Aorta (tissue), 5 donors: ENCODE measurements at regions of chr10 and their contacts with region 1.

Region 1: DNA sequence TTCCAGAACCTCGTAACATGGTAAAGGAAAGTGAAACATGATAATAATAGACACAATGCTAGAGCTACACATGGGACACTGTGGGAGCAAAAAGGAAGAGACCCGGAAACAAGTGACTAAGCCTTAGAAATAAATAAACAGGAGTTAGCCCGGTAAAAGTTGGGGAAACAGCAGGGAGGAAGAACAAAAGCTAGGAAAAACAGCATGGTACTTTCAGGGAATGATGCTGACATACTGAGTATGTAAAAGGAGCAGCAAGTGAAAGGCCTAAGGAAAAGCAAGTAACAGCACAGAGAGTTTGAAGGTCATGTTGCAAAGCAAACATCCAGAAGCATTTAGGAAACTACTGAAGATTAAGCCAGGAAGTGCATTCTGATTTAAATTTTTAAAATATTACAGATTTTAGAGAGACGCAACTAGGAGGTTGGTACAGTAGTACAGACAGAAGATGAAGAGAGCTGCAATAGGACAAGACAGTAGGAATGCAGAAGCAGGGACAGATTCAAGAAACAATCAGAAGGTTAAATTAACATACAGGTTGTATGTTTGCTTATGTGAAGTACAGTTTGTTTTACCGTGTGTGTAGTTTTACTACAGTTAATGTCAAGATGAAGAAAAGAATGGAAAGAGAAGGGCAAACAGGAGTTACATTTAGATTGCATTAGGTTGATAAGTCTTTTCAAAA is 63.7 kb downstream of the ARHGAP12 start:
- DNase-seq: no peak
- ATAC-seq: no peak
- H3K4me3 ChIP-seq: no peak overlapping the region
- H3K27ac ChIP-seq: no peak overlapping the region
- H3K4me1 ChIP-seq: peaks cover 0 to 2% of the 10 kb centered on the region in 2 donors
- H3K27me3 ChIP-seq: no peaks in the 10 kb centered on the region

Region 2: DNA sequence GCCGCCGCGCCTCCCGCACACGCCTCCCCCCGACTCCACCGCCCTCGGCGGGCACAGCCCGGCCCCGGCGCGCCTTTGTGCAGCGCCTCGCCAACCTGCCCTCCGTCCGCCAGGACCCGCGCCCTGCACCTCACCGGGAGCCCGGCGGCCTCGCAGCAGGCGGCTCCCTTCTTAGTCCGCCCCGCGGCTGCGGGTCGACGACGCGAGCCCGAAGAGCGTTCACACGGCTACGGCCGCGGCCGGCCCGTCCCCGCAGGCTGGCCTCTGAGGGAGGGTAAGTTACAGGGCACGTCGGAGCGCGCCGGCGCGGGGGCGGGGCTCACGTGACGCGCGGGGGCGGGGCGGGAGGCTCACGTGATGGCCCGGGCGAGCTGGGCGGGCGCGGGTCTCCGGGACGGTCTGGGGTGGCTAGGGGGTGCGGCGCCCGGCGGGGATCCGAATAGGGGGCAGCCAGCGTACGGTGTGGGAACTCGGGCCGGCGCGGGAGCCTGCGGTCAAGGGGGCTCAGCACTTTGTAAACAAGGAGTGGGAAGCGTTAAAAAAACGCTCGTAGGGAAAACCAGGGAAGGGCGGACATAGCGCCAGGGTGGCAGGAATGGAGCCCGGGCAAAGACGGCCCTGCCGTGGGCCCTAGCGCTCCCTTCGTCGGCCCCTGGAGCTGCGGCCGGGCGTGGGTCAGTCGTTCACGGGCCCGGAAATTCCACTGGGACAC is 63.7 kb after region 1 on chr10 and contains the start of gene ARHGAP12:
- intact Hi-C with region 1: loop called in 1 of 2 experiments (anchors 5 kb)
- DNase-seq: peak; percentile 93 to 97
- ATAC-seq: peak; percentile 97
- H3K4me3 ChIP-seq: peak within 1 kb of the TSS; percentile 69 to 98
- H3K27ac ChIP-seq: peak within 1 kb of the TSS; percentile 93 to 98
- H3K4me1 ChIP-seq: peaks cover 0 to 4% of the 10 kb centered on the region in 2 donors
- H3K27me3 ChIP-seq: no peaks in the 10 kb centered on the region
- total RNA-seq, gene ARHGAP12: 23.6 to 34.6 TPM

Region 3: DNA sequence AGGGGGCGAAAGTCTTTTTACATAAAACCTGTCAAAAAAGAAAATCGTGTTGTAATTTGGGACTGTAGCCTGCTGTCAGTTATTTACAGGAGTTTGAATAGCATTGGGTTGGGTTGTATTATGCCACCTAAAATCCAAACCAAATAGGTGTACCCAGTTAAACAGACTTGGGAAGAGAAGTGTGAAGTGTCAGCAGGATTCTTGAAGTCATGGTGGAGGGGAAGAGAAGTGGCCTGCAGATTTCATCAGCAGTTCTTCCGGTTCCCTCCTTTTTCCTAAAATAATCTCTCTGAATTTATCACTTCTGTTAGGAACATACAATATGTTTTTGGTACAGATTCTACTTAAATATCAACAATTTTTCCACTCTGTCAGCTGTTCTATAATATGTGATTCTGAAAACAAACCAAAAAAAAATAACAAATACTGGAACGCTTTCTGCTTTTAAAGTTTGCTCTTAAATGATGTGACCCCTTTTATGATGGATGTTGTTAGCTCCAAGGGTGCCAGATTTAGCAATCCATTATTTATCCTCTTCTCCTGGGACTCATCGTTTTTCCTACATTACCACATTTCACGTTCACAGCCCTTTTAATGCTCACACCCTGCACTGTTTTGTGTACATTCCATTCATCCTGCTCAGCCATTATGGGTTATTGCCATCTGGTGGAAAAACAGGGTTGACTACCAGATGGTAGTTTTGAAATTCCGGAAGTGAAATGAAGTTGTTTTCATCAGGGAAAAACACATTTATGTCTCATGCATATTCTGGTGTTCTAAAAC is 82.4 kb after region 1 on chr10:
- intact Hi-C with region 1: loop called (anchors 5 kb)
- DNase-seq: no peak
- ATAC-seq: peak; percentile 89
- H3K4me3 ChIP-seq: no peak overlapping the region
- H3K27ac ChIP-seq: no peak overlapping the region
- H3K4me1 ChIP-seq: no peaks in the 10 kb centered on the region
- H3K27me3 ChIP-seq: no peaks in the 10 kb centered on the region

Region 4: DNA sequence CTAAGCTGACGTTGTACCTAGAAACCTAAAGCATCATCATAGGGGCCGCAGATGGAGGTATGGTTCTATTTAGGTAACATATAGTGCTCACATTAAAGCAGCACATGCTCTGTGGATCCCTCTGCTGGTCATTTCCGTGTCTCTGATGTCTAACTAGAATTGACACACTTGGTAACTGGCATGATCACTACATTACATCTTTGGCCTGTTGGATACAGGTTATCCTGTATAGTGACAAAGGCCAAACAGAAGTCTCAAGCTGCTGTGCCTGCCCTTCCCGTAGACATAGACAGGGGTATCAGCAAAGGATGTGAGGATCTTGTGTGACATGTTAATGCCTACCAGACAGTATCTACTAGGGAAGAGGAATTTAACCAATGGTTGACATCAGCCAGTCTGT is 140.1 kb after region 1 on chr10:
- intact Hi-C with region 1: loop called (anchors 5 to 10 kb)
- DNase-seq: no peak
- ATAC-seq: no peak
- H3K4me3 ChIP-seq: no peak overlapping the region
- H3K27ac ChIP-seq: no peak overlapping the region
- H3K4me1 ChIP-seq: no peaks in the 10 kb centered on the region
- H3K27me3 ChIP-seq: no peaks in the 10 kb centered on the region